Heart right ventricle (tissue), 16 donors: ENCODE measurements at regions of chr15 and their contacts with region 1.

Region 1: GRCh38 chr15:91867581-91868026 is 14.1 kb downstream of the SLCO3A1 start:
- DNase-seq: peak; percentile 72 to 86
- ATAC-seq: peak; percentile 75 to 92 (median 86)
- H3K4me3 ChIP-seq: peak overlapping the region in 5 of 10 donors; percentile 3 to 19 (median 10)
- H3K27ac ChIP-seq: peak overlapping the region; percentile 67 to 90 (median 80)
- H3K4me1 ChIP-seq: peaks cover 25 to 94% (median 82%) of the 10 kb centered on the region in 9 donors
- H3K27me3 ChIP-seq: no peaks in the 10 kb centered on the region
- CTCF ChIP-seq: no peak

Region 2: GRCh38 chr15:91926908-91927270 is 59.3 kb after region 1 on chr15:
- intact Hi-C with region 1: loop called in 4 of 10 experiments (anchors 5 to 10 kb)
- DNase-seq: no peak
- ATAC-seq: peak; percentile 29 to 52 (median 50)
- H3K4me3 ChIP-seq: no peak overlapping the region
- H3K27ac ChIP-seq: peak overlapping the region in 8 of 10 donors; percentile 17 to 69 (median 40)
- H3K4me1 ChIP-seq: peaks cover 17 to 90% (median 79%) of the 10 kb centered on the region in 9 donors
- H3K27me3 ChIP-seq: no peaks in the 10 kb centered on the region
- CTCF ChIP-seq: no peak

Region 3: DNA sequence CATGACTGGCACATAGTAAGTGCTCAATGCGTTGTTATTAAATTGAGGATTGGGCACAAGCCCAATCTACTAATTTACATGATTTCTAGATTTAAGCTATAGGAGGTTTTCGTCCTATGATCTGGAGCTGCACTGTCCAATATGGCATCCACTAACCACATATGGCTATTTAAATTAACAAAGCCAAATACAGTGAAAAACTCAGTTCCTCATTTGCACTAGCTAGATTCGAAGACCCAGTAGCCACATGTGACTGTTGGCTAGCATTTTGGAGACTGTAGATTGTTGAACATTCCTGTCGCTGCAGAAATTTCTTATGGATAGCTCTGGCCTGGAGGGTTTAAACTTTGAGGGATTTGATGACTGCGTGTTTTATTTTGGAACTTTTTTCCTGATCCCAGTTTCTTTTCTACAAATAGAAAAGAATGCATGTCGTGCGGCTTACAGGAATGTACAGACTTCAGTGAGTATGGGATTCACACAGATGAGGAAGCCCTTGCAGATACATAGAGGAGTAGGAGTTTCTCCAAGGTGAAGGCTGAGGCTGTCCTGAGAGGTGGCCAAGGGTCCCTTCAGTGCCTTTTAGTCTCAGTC is 68.7 kb after region 1 on chr15:
- intact Hi-C with region 1: loop called in 2 of 10 experiments (anchors 5 to 10 kb)
- DNase-seq: no peak
- ATAC-seq: peak in 1 of 8 donors; percentile 28
- H3K4me3 ChIP-seq: no peak overlapping the region
- H3K27ac ChIP-seq: peak overlapping the region in 5 of 10 donors; percentile 13 to 58 (median 36)
- H3K4me1 ChIP-seq: peaks cover 13 to 67% (median 54%) of the 10 kb centered on the region in 9 donors
- H3K27me3 ChIP-seq: no peaks in the 10 kb centered on the region
- CTCF ChIP-seq: no peak

Region 4: DNA sequence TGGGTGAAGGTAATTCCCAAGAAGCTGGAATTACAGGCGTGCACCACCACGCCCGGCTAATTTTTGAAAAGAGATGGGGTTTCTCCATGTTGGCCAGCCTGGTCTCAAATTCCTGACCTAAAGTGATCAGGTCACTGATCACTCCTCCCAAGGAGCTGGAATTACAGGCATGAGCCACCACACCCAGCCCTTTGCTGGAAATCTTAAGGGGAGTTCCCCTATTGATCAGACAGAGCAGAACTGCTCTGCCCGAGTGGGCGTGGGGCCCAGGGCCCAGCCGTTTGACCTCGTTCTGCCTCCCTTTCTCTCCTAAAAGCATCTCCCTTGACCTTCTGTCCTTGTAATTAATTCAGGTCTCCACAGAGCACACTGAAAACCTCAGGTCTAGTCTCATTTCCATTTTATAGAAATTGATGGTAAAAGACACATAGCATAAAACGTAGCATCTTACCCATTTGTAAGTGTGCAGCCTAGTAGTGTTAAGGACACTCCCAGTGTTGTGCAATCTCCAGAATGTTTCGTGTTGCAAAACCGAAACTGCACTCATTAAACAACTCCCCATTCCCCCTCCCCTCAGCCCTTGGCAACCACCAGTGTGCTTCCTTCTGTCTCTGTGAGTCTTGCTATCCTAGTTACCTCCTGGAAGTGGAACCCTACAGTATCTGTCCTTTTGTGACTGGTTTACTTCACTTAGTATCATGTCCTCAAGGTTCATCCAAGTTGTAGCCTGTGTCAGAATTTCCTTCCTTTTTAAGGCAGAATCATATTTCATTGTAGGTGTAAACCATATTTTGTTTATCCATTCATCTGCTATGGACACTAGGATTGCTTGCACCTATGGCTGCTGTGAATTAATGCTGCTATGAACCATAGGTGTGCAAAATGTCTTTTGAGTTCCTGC is 75.3 kb after region 1 on chr15:
- intact Hi-C with region 1: loop called in 2 of 10 experiments (anchors 5 to 10 kb)
- DNase-seq: peak; percentile 63 to 88
- ATAC-seq: peak; percentile 75 to 92 (median 86)
- H3K4me3 ChIP-seq: peak overlapping the region in 7 of 10 donors; percentile 6 to 35 (median 17)
- H3K27ac ChIP-seq: peak overlapping the region in 9 of 10 donors; percentile 29 to 82 (median 68)
- H3K4me1 ChIP-seq: peaks cover 37 to 98% (median 93%) of the 10 kb centered on the region in 9 donors
- H3K27me3 ChIP-seq: no peaks in the 10 kb centered on the region
- CTCF ChIP-seq: no peak

Region 5: GRCh38 chr15:92069308-92070250 is 202.0 kb after region 1 on chr15:
- intact Hi-C with region 1: loop called in 1 of 10 experiments (anchors 5 kb)
- DNase-seq: peak in 1 of 2 donors; percentile 68
- ATAC-seq: peak; percentile 65 to 92 (median 82)
- H3K4me3 ChIP-seq: peak overlapping the region in 8 of 10 donors; percentile 9 to 39 (median 30)
- H3K27ac ChIP-seq: peak overlapping the region in 9 of 10 donors; percentile 29 to 81 (median 72)
- H3K4me1 ChIP-seq: peaks cover 8 to 70% (median 66%) of the 10 kb centered on the region in 9 donors
- H3K27me3 ChIP-seq: no peaks in the 10 kb centered on the region
- CTCF ChIP-seq: no peak